Lower leg skin (tissue), 4 donors: ENCODE measurements at regions of chr1 and their contacts with region 1.

Region 1: DNA sequence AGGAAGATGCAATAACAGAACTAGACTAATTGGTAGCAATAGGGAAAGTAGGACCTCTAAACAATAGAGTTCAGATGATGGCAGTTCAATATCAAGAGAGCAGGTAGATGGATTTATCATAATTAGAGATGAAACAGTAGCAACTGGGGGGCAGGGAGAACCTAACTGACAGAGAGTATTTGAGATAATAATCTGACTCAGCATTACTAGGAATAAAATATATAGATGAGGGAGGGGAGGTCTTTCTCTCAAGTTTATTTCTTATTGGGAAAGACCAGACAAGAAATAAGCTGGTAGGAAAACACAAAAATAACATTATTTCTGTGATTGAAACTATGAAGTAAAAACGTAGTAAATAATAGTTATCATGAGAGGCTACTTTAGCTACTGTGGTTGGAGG is 1656.7 kb upstream of the B3GALT2 start:
- DNase-seq: no peak
- H3K4me3 ChIP-seq: no peak overlapping the region
- CTCF ChIP-seq: no peak
- POLR2A ChIP-seq: no peak

Region 2: DNA sequence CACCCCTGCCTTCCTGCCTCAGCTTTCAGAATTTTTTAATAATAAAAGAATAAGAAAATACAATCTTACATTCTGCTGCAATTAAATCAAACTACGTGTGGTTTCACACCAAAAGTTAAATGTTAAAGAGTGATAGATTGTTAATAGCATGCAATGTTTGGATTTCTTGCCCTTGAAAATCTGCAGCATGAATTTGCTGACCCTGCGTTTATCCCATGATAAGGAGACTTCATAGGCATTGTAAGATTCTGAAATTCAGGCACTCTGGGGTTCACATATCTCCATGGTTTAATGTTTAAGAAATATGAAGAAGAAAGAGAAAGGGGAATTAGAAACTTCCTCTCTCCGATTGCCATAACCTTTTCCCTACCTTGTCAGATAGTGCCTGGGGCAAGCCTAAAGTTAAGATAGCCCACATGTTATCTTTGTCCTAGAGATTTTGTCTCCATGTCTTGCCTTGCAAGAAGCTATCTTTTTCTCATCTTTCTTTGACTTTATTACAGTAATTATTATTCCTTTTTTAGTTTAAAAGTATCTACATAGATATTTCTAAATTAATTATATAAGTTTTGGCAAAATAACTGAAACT is 40.4 kb before region 1 on chr1:
- intact Hi-C with region 1: loop called (anchors 1 kb)
- DNase-seq: no peak
- H3K4me3 ChIP-seq: no peak overlapping the region
- CTCF ChIP-seq: no peak
- POLR2A ChIP-seq: no peak